ENCODE measurements at regions of chr20 and their contacts with region 1.

Region 1: DNA sequence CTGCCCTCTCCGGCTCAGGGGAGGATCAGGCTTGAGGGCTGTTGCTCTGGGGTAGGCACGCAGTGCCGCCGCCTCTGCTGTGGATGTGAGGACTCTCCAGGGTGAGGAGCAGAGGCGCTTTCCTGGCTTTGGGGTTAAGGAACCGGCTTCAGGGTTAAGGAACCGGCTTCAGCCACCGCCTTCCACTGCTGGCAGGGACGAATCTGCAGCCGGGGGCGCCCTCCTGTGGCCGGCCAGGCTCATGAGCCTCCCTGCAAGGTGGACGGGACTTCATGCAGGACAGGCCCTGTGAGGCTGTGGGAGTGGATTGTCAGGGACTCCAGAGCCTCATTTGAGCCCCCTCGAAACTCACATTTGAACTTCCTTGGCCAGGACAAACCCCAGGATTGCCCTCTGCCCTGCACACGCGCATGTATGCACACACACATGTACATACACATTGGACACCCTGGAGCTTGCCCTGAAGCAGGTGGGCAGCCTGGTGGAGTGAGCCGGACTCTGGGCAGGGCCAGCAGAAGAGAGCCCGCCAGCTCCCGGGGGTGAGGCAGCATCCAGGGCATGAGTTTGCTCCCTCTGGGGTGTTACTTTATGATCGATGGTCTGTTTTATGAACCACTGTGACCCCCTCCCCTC is 146.8 kb downstream of the PHACTR3 start:
- DNase-seq: peak; percentile 63 to 78
- ATAC-seq: peak; percentile 61 to 87 (median 80)
- H3K4me3 ChIP-seq: no peak overlapping the region
- H3K27ac ChIP-seq: peak overlapping the region in 2 of 10 donors; percentile 79 to 82
- H3K4me1 ChIP-seq: peaks cover 0 to 42% (median 29%) of the 10 kb centered on the region in 9 donors
- H3K27me3 ChIP-seq: peaks cover 0 to 71% (median 23%) of the 10 kb centered on the region in 7 donors
- CTCF ChIP-seq: peak; percentile 51 to 87 (median 79)

Region 2: DNA sequence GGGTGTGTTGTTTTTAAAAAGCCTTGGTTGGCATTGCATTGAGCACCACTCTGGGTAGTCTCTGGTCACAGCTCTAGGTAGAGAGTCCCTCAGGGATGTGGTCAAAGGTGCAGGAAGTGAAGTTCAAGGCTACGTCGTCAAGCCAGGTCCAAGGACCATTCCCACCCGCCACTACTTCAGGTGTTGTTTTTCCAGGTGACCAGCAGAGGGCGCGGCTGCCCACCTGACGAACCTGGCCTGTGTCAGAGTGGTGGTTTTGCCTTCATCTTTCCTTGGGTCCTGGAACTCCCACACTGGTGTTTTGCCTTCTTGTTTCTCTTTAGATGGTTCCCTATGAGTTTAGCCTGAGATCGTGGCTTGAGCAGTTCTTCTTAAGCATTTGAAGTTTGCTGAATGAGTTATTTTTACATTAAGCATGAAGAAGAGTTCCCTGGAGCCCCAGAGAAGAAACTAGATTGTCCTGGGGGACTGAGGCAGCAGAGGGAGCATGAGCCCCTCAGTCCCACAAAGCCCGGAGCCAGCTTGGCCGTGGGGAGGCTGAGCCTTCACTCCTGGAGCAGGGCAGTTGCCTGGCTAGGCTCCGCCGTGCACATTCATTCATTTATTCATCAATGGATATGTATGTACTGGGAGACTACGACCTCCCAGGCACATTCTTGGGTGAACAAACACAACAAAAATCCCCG is 152.4 kb before region 1 on chr20:
- intact Hi-C with region 1: loop called (anchors 2 to 5 kb)
- DNase-seq: peak in 1 of 2 donors; percentile 39
- ATAC-seq: peak in 7 of 8 donors; percentile 42 to 90 (median 59)
- H3K4me3 ChIP-seq: no peak overlapping the region
- H3K27ac ChIP-seq: no peak overlapping the region
- H3K4me1 ChIP-seq: peaks cover 0 to 12% (median 0%) of the 10 kb centered on the region in 9 donors
- H3K27me3 ChIP-seq: peaks cover 6 to 74% (median 32%) of the 10 kb centered on the region in 7 donors
- CTCF ChIP-seq: peak; percentile 37 to 83 (median 71)